ENCODE measurements at regions of chr11 and their contacts with region 1.

Region 1: GRCh38 chr11:76380967-76381719 is at the starts of genes GVQW3 and THAP12:
- DNase-seq: peak; percentile 97
- ATAC-seq: peak; percentile 95
- H3K4me3 ChIP-seq: peak within 1 kb of the TSS; percentile 99
- H3K27ac ChIP-seq: peak within 1 kb of the TSS; percentile 73
- H3K4me1 ChIP-seq: peaks cover 8% of the 10 kb centered on the region
- H3K27me3 ChIP-seq: no peaks in the 10 kb centered on the region
- CTCF ChIP-seq: no peak; the same call in 1 of the 2 replicates
- POLR2A ChIP-seq: peak; percentile 39; the same call in 1 of the 2 replicates
- RAD21 ChIP-seq: no peak
- total RNA-seq, gene GVQW3: 0.83 and 1.1 TPM in 2 replicates
- total RNA-seq, gene THAP12: 25.1 and 48.3 TPM in 2 replicates

Region 2: DNA sequence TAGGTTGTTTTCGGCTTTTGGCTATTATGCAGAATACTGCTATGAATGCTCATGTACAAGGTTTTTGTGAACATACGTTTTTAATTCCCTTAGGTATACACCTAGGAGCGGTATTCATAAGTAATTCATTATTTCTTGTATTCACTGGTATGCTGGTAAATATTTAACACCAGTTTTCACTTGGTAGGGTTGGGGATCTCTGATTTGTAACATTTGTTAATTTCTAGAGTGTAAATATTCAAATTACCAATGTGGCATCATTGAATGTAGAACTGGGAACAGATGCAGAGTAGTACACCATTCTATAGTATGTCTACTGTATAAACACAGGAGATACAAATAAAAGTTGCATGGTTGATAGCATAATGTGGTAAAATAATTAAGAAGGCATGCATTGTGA is 16.2 kb after region 1 on chr11:
- CTCF ChIA-PET with region 1: no interaction called
- POLR2A ChIA-PET with region 1: no interaction called
- dilution Hi-C with region 1: no loop called
- in situ Hi-C with region 1: no loop called
- intact Hi-C with region 1: no loop called
- DNase-seq: no peak
- ATAC-seq: no peak
- H3K4me3 ChIP-seq: no peak overlapping the region
- H3K27ac ChIP-seq: no peak overlapping the region
- H3K4me1 ChIP-seq: no peaks in the 10 kb centered on the region
- H3K27me3 ChIP-seq: no peaks in the 10 kb centered on the region
- CTCF ChIP-seq: no peak
- POLR2A ChIP-seq: no peak
- RAD21 ChIP-seq: no peak

Region 3: DNA sequence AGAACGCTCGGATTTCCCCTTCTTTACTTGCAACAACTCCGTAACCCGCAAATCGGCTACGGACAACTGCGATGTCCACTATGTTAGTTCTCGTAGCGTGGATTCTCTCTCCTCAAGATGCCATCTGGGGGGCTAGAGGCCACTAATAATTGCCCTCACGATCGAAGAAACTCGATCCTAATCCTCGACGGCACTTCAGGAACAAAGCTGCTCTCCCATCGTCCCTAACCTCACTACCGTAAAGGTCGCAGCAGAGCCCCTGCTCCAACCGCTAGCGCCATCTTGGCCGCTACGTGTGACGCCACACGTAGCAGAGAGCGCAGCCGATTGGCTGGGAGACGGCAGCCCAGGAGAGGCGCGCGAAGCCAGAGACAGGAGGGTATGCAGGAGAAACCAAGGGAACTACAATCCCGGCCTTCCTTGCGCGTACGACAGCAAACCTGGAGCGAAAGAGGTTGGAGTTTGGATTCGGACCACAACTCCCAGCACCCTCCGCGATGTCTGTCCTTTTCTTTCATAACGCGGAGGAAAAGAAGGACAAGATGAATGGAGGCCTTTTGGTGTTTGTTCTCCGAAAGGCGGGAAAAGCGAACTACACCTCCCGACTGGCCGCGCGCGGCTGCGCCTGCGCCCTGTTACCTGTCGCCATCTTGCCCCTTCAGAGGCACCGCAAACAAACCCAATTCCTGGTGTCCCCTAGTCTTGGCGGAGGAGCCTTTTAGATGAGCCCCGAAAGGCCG is 63.4 kb after region 1 on chr11 and contains the start of gene EMSY:
- CTCF ChIA-PET with region 1: no interaction called
- POLR2A ChIA-PET with region 1: no interaction called
- dilution Hi-C with region 1: no loop called
- in situ Hi-C with region 1: no loop called
- intact Hi-C with region 1: loop called (anchors 5 kb)
- DNase-seq: peak; percentile 100
- ATAC-seq: peak; percentile 94
- H3K4me3 ChIP-seq: peak within 1 kb of the TSS; percentile 68
- H3K27ac ChIP-seq: peak within 1 kb of the TSS; percentile 82
- H3K4me1 ChIP-seq: no peaks in the 10 kb centered on the region
- H3K27me3 ChIP-seq: no peaks in the 10 kb centered on the region
- CTCF ChIP-seq: no peak
- POLR2A ChIP-seq: peak; percentile 97
- RAD21 ChIP-seq: no peak
- total RNA-seq, gene EMSY: 22.0 and 28.9 TPM in 2 replicates

Region 4: DNA sequence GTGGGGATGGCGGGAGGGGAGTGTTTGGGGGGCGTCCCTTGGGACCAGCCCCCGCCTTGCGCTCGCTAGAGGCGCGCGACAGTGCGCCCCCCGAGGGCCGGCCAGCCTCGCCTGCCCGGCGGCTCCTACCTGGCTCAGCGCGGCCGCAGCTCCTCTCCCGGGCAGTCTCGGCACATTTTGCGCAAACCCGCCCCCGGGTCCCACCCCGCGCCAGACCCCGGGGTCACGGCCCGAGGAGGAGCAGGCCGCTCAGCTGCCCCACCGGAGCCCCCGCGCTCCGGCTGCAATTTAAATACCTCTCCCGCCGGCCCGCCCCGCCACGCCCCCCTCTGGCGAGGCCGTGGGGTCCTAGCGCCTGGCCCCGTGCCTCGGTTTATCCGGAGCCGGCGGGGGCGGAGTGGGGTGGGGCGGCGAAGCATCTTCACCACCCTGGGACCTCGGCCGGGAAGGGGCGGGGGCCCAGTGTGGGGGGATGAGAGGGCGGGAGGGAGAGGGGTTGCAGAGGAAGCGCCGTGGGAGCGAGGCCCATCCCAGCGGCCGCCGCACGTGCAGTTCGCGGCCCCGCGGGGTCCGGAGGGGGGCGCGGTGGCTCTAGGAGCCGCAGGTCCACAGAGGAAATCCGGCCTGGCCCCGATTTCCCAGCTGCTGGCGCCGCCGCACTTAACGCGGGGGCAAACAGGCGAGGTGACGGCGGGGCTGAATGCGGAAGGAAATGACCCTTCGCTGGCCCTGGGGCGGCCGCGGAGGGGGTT is 289.5 kb after region 1 on chr11 and contains the start of gene LRRC32:
- CTCF ChIA-PET with region 1: no interaction called
- POLR2A ChIA-PET with region 1: no interaction called
- dilution Hi-C with region 1: no loop called
- in situ Hi-C with region 1: no loop called
- intact Hi-C with region 1: loop called (anchors 10 kb)
- DNase-seq: no peak
- ATAC-seq: peak; percentile 15
- H3K4me3 ChIP-seq: peak within 1 kb of the TSS; percentile 25
- H3K27ac ChIP-seq: peak within 1 kb of the TSS; percentile 8
- H3K4me1 ChIP-seq: peaks cover 11% of the 10 kb centered on the region
- H3K27me3 ChIP-seq: 0 out of 2 replicates have a peak, but pooled peaks cover 3% of the 10 kb centered on the region
- CTCF ChIP-seq: no peak
- POLR2A ChIP-seq: no peak
- RAD21 ChIP-seq: no peak
- total RNA-seq, gene LRRC32: 4.2 and 5.2 TPM in 2 replicates